H1 (cell line): ENCODE measurements at regions of chr11 and their contacts with region 1.

Region 1: DNA sequence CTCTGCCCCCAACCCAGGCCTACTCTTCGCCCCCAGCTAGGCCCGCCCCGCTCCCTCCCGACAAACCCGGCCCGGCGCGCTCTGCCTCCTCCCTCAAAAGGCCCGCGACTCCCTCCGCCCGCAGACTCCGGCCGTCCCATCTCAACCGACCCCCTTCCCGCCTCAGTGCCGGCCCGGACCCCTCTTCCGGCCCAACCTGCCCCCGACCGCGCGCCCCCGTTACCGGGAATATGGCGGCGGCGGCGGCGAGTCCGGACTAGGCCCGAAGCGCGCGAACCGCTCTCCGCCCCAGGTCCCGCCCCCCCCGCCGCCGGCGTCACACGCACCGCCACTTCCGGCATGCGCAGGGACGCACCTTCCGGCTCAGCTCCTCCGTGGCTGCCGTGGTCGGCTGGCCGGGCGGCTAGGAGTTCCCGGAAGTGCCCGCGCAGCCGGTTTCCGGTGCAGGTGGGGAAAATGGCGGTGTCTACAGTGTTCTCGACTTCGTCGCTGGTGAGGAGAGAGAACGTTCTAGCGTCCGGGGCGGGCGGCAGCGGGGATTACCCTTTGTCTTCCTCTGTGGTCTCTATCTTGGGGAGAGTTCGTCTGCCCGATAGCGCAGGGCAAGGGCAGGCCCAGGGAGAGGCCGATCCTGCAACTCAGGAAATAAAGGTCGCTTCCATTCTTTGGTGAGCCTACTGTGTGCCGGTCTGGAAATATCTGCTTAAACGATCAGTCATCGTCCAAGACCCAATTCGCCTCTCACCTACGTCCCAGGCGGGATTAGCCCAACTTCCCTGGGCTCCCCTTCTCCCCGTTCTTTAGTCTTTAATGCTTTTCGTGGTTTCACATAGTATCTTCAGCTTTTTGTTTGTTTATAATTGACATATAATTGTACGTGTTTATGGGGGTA is at the starts of genes CPSF7 and SDHAF2:
- DNase-seq: peak; percentile 82 to 98
- H3K4me3 ChIP-seq: peak within 1 kb of the TSS; percentile 76 to 94 (median 89)
- H3K27ac ChIP-seq: peak within 1 kb of the TSS; percentile 97
- H3K4me1 ChIP-seq: no peaks in the 10 kb centered on the region; a peak in 1 of 7 replicates
- H3K27me3 ChIP-seq: no peaks in the 10 kb centered on the region
- CTCF ChIP-seq: no peak
- EP300 ChIP-seq: 0 out of 3 replicates have a peak, but pooled peaks of 1 of the 2 experiments have one; percentile 24
- POLR2A ChIP-seq: peak; percentile 78 to 91
- RAD21 ChIP-seq: no peak
- total RNA-seq, gene CPSF7: 95.9 and 96.7 TPM in 2 replicates
- total RNA-seq, gene SDHAF2: 41.0 and 44.8 TPM in 2 replicates

Region 2: GRCh38 chr11:61310749-61311148 is 119.2 kb before region 1 on chr11:
- CTCF ChIA-PET with region 1: no interaction called
- POLR2A ChIA-PET with region 1: no interaction called
- DNase-seq: no peak
- H3K4me3 ChIP-seq: no peak overlapping the region
- H3K27ac ChIP-seq: no peak overlapping the region
- H3K4me1 ChIP-seq: no peaks in the 10 kb centered on the region
- H3K27me3 ChIP-seq: no peaks in the 10 kb centered on the region
- CTCF ChIP-seq: no peak
- EP300 ChIP-seq: no peak
- POLR2A ChIP-seq: no peak
- RAD21 ChIP-seq: no peak

Region 3: DNA sequence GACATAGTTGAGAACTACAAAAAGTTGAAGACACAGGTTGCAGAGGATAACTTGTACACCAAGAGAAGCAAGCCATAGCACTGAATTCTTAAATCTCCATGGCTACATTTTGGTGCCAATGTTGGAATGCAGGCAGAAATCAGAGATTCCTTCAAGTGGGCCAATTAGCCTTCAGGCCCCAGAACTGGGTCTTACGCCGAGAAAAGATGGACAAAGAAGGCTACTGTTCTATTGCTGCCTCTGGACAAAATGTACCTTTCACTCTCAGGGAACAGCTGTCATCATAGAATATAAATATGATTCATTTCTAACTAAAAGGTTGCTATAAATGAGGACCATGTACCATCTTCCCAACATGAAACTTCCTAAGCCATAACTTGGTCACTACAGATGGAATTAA is 23.9 kb before region 1 on chr11:
- CTCF ChIA-PET with region 1: interaction called, 5 read pairs
- POLR2A ChIA-PET with region 1: interaction called, 94 read pairs
- DNase-seq: no peak
- H3K4me3 ChIP-seq: no peak overlapping the region
- H3K27ac ChIP-seq: no peak overlapping the region
- H3K4me1 ChIP-seq: no peaks in the 10 kb centered on the region
- H3K27me3 ChIP-seq: no peaks in the 10 kb centered on the region
- CTCF ChIP-seq: no peak
- EP300 ChIP-seq: no peak
- POLR2A ChIP-seq: no peak
- RAD21 ChIP-seq: no peak